GM18951 (cell line): ENCODE measurements at regions of chr1 and their contacts with region 1.

Region 1: DNA sequence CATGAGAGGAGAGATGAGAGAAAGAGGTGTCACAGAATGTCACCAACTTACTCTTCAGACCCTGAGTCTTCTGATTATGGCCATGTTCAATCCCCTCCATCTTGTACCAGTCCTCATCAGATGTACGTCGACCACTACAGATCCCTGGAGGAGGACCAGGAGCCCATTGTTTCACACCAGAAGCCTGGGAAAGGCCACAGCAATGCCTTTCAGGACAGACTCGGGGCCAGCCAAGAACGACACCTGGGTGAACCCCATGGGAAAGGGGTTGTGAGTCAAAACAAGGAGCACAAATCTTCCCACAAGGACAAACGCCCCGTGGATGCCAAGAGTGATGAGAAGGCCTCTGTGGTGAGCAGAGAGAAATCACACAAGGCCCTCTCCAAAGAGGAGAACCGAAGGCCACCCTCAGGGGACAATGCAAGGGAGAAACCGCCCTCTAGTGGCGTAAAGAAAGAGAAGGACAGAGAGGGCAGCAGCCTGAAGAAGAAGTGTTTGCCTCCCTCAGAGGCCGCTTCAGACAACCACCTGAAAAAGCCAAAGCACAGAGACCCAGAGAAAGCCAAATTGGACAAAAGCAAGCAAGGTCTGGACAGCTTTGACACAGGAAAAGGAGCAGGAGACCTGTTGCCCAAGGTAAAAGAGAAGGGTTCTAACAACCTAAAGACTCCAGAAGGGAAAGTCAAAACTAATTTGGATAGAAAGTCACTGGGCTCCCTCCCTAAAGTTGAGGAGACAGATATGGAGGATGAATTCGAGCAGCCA is 8.0 kb downstream of the ELOA start:
- POLR2A ChIP-seq: no peak

Region 2: DNA sequence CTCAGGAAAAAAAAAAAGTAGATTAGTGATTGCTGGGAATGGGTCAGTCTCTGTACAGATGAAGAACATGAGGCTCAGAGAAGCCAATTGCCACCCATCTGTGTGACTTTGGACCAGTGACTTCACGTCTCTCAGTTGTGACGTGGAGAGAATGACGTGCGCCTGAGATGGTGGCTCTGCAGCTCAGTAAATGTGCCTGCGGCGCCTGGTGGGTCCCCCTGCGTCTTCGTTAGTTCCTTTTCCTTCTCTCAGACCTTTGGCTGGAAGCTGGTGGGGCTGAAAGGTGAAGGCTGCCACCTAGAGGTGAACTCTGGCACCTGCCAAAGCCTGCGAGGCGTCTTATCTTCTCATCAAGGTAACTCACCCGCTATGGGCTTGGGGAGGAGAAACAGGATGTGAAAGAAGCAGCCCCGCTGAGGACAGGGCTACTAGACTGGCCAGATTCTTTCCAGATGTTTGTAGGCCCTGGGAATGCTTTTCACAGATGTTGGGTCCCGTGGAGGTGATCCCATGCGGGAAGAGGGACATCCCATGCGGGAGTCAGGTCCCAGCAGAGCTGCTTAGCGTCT is 211.4 kb before region 1 on chr1:
- in situ Hi-C with region 1: loop called (anchors 5 kb)
- POLR2A ChIP-seq: no peak

Region 3: DNA sequence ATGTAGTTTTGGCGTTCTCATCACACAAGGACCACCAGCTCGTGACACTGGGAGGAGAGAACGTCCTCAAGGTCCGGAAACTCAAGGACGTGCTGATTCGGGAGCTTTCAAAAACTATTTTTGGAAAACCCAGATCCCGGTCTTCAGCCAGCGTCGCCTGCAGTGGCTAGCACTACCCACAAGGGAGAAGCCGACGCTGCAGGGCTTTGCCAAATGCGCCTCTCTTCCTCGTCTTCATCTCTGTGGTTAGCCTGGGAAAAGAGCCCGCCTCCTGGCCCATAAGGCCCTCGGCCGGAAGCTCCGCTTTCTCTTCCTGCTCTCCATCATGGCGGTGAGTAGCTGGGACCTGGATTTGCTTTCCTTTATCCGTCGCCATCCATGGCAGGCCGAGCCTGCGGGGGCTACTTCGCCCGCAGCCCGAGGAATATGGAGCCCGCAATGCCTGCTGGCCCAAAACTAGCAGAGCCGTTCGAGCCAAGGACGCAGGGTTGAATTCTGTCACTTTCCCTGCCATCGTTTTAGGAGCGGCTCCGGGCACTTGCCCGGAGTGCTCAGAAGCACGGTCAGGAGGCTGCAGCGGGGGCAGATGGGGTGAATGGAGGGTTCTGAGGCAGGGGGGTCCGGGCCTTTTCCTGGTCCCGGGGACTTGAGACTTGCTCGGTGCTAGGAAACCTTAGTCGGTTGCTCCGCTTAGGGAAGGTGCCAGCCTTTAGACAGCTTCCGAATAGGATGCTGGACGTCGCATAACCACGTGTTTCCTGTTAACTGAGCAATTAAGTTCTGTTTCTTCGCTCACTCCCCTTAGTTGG is 59.5 kb before region 1 on chr1 and contains the start of gene RPL11:
- in situ Hi-C with region 1: loop called (anchors 10 kb)
- POLR2A ChIP-seq: peak; percentile 90